SK-N-SH (cell line): ENCODE measurements at regions of chr5 and their contacts with region 1.

Region 1: DNA sequence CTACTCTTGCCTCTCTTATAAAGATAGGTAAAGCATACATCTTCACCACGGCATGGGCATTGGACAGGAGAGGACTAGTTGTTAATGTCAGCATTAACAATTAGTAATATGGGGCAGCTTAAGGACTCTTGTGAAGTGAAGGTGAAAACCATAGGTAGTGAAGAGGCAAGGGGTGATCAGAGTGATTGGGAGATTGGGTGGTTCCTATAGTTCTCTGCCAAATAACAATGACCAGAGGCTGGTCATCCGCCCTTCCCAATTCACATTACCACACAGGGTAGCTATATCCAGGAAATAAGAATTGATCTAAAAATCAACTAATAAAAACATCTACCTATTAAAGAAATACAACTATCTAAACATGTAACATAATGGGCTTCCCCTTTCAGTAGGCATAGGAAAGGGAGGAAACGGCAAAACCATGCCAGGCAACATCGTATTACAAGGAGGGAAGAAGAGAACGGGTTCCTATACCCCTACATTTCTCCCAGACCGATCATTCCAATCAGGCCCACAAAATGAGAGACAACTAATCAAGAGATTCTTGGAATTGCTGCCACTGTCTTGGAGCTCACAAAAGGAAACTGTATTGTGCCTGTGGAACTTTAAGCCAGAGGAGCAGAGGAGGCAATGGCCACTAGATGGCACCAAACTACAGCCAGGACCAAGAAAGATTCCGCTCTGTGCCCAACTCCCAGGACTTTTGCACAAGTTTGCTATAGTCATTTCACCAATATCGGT is 121.6 kb downstream of the FBXL17 start:
- DNase-seq: peak; percentile 47
- H3K4me3 ChIP-seq: peak overlapping the region in 1 of 2 experiments; percentile 21; a peak in 1 of 4 replicates
- H3K27ac ChIP-seq: no peak overlapping the region
- H3K4me1 ChIP-seq: peaks cover 0 to 6% of the 10 kb centered on the region in 2 experiments; a peak in 2 of 4 replicates
- H3K27me3 ChIP-seq: no peaks in the 10 kb centered on the region
- CTCF ChIP-seq: peak; percentile 98
- EP300 ChIP-seq: no peak
- RAD21 ChIP-seq: peak; percentile 94

Region 2: GRCh38 chr5:108222011-108222410 is 38.3 kb before region 1 on chr5:
- CTCF ChIA-PET with region 1: interaction called, 11 read pairs
- POLR2A ChIA-PET with region 1: no interaction called
- DNase-seq: no peak
- H3K4me3 ChIP-seq: no peak overlapping the region
- H3K27ac ChIP-seq: no peak overlapping the region; a peak in 1 of 4 replicates
- H3K4me1 ChIP-seq: no peaks in the 10 kb centered on the region
- H3K27me3 ChIP-seq: no peaks in the 10 kb centered on the region
- CTCF ChIP-seq: no peak
- EP300 ChIP-seq: no peak
- RAD21 ChIP-seq: no peak

Region 3: DNA sequence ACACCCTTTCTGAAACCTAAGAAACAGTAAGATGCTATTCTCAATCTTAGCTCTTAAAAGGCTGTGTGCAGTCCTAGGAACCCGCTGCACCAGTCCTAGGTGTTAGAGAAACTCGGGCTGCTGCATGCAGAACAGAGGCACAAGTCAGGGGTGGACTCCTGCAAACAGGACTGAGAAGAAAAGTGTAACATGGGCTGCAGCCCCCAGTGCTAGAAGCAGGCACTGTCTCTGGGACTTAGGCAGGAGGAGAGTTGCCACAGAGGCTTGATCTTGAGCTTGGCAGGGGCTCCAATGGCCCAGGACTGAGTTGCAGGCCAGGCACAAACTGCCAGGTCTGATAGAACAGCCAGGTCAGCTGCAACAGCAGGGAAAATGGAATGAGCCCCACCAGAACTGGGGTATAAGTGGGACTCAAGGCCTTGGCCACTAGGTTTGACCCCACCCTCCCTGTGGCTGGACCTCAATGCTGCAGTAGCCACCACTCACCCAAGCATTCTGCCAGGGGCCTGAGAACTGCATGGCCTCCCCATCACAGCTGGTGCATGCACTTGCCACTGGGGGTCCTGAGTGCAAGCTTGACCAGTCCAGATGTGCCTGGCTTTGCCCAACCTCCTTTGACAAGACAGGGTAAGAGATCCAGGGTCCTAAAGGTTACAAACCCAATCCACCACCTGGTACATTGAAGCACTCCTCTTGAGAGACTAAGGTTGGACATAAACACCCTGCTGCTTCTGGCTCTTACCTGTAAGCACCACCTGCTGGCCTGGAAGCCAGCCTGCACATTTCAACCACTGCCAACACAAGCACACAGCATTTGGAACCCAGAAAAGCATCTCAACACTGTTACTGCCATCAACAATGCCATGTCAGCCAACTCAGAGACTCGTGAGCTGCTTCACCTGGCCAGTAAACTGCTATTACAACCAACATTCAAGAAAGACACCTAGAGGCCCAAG is 18.3 kb after region 1 on chr5:
- CTCF ChIA-PET with region 1: interaction called, 12 read pairs
- POLR2A ChIA-PET with region 1: no interaction called
- DNase-seq: no peak
- H3K4me3 ChIP-seq: no peak overlapping the region
- H3K27ac ChIP-seq: no peak overlapping the region
- H3K4me1 ChIP-seq: no peaks in the 10 kb centered on the region
- H3K27me3 ChIP-seq: no peaks in the 10 kb centered on the region
- CTCF ChIP-seq: no peak
- EP300 ChIP-seq: no peak
- RAD21 ChIP-seq: no peak

Region 4: GRCh38 chr5:108339232-108339631 is 78.9 kb after region 1 on chr5:
- CTCF ChIA-PET with region 1: interaction called, 10 read pairs
- POLR2A ChIA-PET with region 1: no interaction called
- DNase-seq: no peak
- H3K4me3 ChIP-seq: no peak overlapping the region
- H3K27ac ChIP-seq: no peak overlapping the region
- H3K4me1 ChIP-seq: no peaks in the 10 kb centered on the region; a peak in 1 of 4 replicates
- H3K27me3 ChIP-seq: no peaks in the 10 kb centered on the region
- CTCF ChIP-seq: no peak
- EP300 ChIP-seq: no peak
- RAD21 ChIP-seq: no peak

Region 5: GRCh38 chr5:108353087-108353486 is 92.8 kb after region 1 on chr5:
- CTCF ChIA-PET with region 1: interaction called, 18 read pairs
- POLR2A ChIA-PET with region 1: no interaction called
- DNase-seq: no peak
- H3K4me3 ChIP-seq: no peak overlapping the region
- H3K27ac ChIP-seq: no peak overlapping the region
- H3K4me1 ChIP-seq: no peaks in the 10 kb centered on the region
- H3K27me3 ChIP-seq: no peaks in the 10 kb centered on the region
- CTCF ChIP-seq: no peak
- EP300 ChIP-seq: no peak
- RAD21 ChIP-seq: no peak

Region 6: DNA sequence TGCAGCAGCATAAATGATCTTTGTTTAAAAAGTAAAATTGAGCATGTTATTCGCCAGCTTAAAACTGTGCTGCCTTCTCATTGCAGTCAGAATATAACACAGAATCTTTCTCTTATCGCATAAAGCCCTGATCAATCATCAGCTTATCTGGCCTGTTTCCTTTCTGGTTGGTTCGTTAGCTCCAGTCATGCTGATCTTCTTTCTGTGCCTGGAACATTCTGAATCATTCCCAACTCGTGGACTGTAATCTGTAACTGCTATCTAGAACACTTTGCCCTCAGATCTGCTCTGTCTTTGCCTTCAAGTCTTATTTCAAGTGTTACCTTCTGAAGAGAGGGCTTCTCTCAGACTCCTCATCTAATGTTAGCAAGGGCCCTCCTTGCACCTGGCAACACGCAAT is 475.5 kb after region 1 on chr5:
- CTCF ChIA-PET with region 1: no interaction called
- POLR2A ChIA-PET with region 1: no interaction called
- DNase-seq: peak; percentile 21
- H3K4me3 ChIP-seq: no peak overlapping the region
- H3K27ac ChIP-seq: no peak overlapping the region
- H3K4me1 ChIP-seq: no peaks in the 10 kb centered on the region; a peak in 1 of 4 replicates
- H3K27me3 ChIP-seq: no peaks in the 10 kb centered on the region
- CTCF ChIP-seq: no peak
- EP300 ChIP-seq: peak in 1 of 2 experiments; percentile 33; a peak in 1 of 4 replicates
- RAD21 ChIP-seq: no peak